ENCODE measurements at regions of chr15 and their contacts with region 1.

Region 1: GRCh38 chr15:30827625-30828288 is 76.0 kb upstream of the FAN1 start:
- DNase-seq: no peak
- H3K4me3 ChIP-seq: no peak overlapping the region
- H3K27ac ChIP-seq: no peak overlapping the region
- H3K4me1 ChIP-seq: no peaks in the 10 kb centered on the region
- H3K27me3 ChIP-seq: no peaks in the 10 kb centered on the region
- CTCF ChIP-seq: no peak

Region 2: DNA sequence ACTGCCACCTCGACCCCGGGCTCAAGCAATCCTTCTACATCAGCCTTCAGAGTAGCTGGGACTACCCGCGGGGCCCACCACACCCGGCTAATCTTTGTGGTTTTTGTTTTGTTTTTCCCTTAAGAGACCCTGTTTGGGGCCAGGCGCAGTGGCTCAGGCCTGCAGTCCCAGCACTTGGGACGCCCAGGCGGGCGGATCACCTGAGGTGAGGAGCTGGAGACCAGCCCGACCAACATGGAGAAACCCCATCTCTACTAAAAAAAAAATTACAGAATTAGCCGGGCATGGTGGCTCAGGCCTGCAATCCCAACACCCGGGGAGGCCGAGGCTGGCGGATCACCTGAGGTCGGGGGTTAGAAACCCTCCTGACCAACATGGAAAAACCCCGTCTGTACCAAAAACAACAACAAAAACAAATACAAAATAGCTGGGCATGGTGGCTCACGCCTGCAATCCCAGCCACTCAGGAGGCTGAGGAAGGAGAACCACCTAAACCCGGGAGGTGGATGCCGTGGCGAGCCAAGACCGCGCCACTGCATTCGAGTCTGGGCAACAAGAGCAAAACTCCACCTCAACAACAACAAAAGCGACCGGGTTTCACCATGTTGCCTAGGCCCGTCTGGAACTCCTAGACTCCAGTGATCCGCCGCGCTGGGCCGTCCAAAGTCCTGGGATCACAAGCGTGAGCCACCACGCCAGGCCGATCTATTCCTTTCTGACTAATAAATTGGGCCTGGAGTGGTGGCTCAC is 67.9 kb after region 1 on chr15:
- CTCF ChIA-PET with region 1: no interaction called
- POLR2A ChIA-PET with region 1: interaction called, 12 read pairs
- intact Hi-C with region 1: no loop called
- DNase-seq: no peak
- H3K4me3 ChIP-seq: no peak overlapping the region
- H3K27ac ChIP-seq: peak overlapping the region; percentile 45
- H3K4me1 ChIP-seq: peaks cover 19% of the 10 kb centered on the region
- H3K27me3 ChIP-seq: no peaks in the 10 kb centered on the region
- CTCF ChIP-seq: no peak

Region 3: DNA sequence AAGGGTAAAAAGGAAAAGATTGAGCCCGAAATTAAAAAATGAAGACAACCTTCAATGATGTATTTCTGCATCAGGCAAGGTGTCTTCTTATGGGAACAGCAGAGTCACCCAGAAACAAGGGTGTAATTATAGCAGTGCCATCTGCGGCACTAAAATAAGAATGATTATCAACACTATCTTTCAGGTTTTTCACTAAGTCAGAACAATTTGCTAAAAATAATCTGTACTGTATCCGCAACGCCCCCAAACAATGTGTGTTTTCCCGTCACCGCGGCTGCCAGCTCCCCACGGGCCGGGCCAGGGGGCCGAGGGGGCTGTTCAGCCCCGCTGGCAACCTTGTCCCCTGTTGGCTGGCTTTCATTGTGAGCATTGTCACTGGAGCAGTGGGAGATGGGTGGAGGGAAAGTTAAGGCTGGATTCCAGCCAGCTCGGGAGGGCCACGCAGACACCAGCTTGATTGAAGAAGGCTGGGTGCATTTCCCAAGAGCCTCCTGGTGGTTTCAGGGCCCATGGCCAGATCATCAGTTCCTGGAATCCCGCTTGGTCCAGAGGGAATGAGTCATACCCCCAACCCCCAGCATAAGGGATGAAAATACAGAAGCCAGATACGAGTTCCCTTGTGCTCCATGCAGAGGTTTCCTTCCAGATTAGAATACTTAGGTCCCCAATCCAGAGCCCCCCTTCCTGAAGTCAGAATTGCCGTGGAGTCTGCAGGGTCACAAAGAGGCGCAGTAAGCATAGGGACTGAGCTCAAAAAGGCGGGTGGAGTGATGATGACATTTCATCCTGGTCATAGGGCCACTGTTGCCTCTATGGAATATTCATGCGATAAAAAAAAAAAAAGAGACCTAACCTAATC is 408.7 kb after region 1 on chr15:
- CTCF ChIA-PET with region 1: no interaction called
- POLR2A ChIA-PET with region 1: no interaction called
- intact Hi-C with region 1: no loop called
- DNase-seq: peak; percentile 90
- H3K4me3 ChIP-seq: peak overlapping the region; percentile 6
- H3K27ac ChIP-seq: peak overlapping the region; percentile 6
- H3K4me1 ChIP-seq: peaks cover 21% of the 10 kb centered on the region
- H3K27me3 ChIP-seq: no peaks in the 10 kb centered on the region
- CTCF ChIP-seq: no peak

Measured in A673 (cell line).